ENCODE measurements at regions of chr1 and their contacts with region 1.

Region 1: GRCh38 chr1:42734192-42735035 is 5.6 kb downstream of the CLDN19 start:
- DNase-seq: no peak
- H3K4me3 ChIP-seq: no peak overlapping the region
- H3K27ac ChIP-seq: no peak overlapping the region
- H3K4me1 ChIP-seq: no peaks in the 10 kb centered on the region
- H3K27me3 ChIP-seq: no peaks in the 10 kb centered on the region
- CTCF ChIP-seq: no peak

Region 2: DNA sequence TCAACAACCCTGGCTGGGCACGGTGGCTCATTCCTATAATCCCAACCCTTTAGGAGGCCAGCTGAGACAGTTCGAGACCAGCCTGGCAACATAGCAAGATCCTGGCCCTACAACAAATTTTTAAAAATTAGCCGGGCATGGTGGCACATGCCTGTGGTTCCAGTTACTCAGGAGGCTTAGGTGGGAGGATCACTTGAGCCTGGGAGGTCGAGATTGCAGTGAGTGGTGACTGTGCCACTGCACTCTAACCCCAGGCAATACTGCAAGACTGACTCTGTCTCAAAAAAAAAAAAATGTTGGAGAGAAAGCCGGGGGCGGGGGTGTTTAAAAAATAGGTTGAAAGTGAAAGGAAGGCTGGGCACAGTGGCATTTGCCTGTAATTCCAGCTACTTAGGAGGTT is 10.9 kb before region 1 on chr1:
- CTCF ChIA-PET with region 1: no interaction called
- POLR2A ChIA-PET with region 1: interaction called, 13 read pairs
- intact Hi-C with region 1: no loop called
- DNase-seq: no peak
- H3K4me3 ChIP-seq: no peak overlapping the region
- H3K27ac ChIP-seq: no peak overlapping the region
- H3K4me1 ChIP-seq: no peaks in the 10 kb centered on the region
- H3K27me3 ChIP-seq: no peaks in the 10 kb centered on the region
- CTCF ChIP-seq: no peak